ENCODE measurements at regions of chr4 and their contacts with region 1.

Region 1: DNA sequence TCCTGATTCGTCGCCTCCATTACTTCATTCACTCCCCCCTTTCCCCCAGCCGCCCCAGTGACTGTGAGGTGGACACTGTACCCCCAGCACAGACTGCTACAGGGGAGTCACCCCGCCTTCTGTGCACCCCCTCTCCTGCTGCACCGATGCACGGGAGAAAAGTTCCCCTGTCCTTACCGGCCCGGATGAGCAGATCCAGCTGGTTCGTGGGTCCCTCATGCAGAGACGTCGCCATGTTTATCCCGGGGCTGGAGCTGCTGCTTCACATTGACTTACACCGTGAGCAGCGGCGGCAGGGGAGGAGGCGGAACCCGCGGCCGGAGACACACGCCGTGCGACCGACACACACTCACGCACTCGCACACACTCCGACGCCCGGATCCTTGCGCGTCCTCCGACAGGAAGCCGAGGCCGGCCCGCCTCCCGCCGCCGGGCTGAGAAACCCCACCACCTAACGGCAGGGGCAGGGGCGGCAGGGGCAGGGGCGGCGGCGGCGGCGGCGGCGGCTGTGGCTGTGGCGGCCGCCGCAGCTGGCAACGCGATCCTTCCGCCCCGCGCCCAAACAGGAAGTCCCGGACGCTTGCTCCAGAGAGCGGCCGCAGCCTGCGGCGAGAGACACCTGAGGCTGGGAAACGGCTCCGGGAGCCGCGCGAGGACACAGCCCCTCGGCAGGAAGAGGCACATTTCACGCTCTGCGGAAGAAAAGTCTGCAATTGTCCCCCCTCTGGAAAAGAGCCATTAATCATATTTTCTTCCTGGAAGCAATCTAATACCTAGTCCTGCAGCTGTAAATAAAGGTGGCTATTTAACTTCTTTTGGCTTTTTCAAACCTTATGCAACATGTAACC is 68.6 kb downstream of the NOCT start:
- DNase-seq: peak; percentile 92
- ATAC-seq: peak; percentile 64
- H3K4me3 Mint-ChIP-seq: peak overlapping the region; percentile 100
- H3K27ac Mint-ChIP-seq: peak overlapping the region; percentile 99
- H3K4me1 Mint-ChIP-seq: peaks cover 30% of the 10 kb centered on the region
- H3K27me3 Mint-ChIP-seq: no peaks in the 10 kb centered on the region

Region 2: GRCh38 chr4:138242076-138242833 is 841.9 kb before region 1 on chr4 and contains the start of gene SLC7A11:
- CTCF ChIA-PET with region 1: no interaction called
- POLR2A ChIA-PET with region 1: no interaction called
- intact Hi-C with region 1: loop called in 1 of 2 experiments (anchors 2 kb)
- DNase-seq: peak; percentile 75
- ATAC-seq: peak; percentile 95
- H3K4me3 Mint-ChIP-seq: peak within 1 kb of the TSS; percentile 78
- H3K27ac Mint-ChIP-seq: peak within 1 kb of the TSS; percentile 88
- H3K4me1 Mint-ChIP-seq: peaks cover 7% of the 10 kb centered on the region
- H3K27me3 Mint-ChIP-seq: no peaks in the 10 kb centered on the region
- total RNA-seq, gene SLC7A11: 4.4 to 4.9 TPM

Region 3: GRCh38 chr4:138567696-138568095 is 516.5 kb before region 1 on chr4:
- CTCF ChIA-PET with region 1: no interaction called
- POLR2A ChIA-PET with region 1: no interaction called
- intact Hi-C with region 1: no loop called
- DNase-seq: no peak
- ATAC-seq: no peak
- H3K4me3 Mint-ChIP-seq: no peak overlapping the region
- H3K27ac Mint-ChIP-seq: no peak overlapping the region
- H3K4me1 Mint-ChIP-seq: no peaks in the 10 kb centered on the region
- H3K27me3 Mint-ChIP-seq: peaks cover 1% of the 10 kb centered on the region

Region 4: GRCh38 chr4:139015269-139015947 is 68.8 kb before region 1 on chr4 and contains the start of gene NOCT:
- CTCF ChIA-PET with region 1: no interaction called
- POLR2A ChIA-PET with region 1: interaction called, 4 read pairs
- intact Hi-C with region 1: loop called (anchors 1 kb)
- DNase-seq: peak; percentile 98
- ATAC-seq: peak; percentile 92
- H3K4me3 Mint-ChIP-seq: peak within 1 kb of the TSS; percentile 90
- H3K27ac Mint-ChIP-seq: peak within 1 kb of the TSS; percentile 96
- H3K4me1 Mint-ChIP-seq: peaks cover 41% of the 10 kb centered on the region
- H3K27me3 Mint-ChIP-seq: no peaks in the 10 kb centered on the region
- total RNA-seq, gene NOCT: 16.5 to 20.5 TPM

Region 5: GRCh38 chr4:139295206-139295941 is 211.2 kb after region 1 on chr4:
- CTCF ChIA-PET with region 1: interaction called, 3 read pairs
- POLR2A ChIA-PET with region 1: interaction called, 3 read pairs
- intact Hi-C with region 1: loop called (anchors 1 to 2 kb)
- DNase-seq: peak; percentile 99
- ATAC-seq: peak; percentile 89
- H3K4me3 Mint-ChIP-seq: peak overlapping the region; percentile 95
- H3K27ac Mint-ChIP-seq: peak overlapping the region; percentile 96
- H3K4me1 Mint-ChIP-seq: peaks cover 38% of the 10 kb centered on the region
- H3K27me3 Mint-ChIP-seq: no peaks in the 10 kb centered on the region

Region 6: GRCh38 chr4:139453371-139454110 is 369.4 kb after region 1 on chr4:
- CTCF ChIA-PET with region 1: interaction called, 4 read pairs
- POLR2A ChIA-PET with region 1: no interaction called
- intact Hi-C with region 1: loop called (anchors 1 kb)
- DNase-seq: peak; percentile 99
- ATAC-seq: peak; percentile 90
- H3K4me3 Mint-ChIP-seq: peak overlapping the region; percentile 91
- H3K27ac Mint-ChIP-seq: peak overlapping the region; percentile 98
- H3K4me1 Mint-ChIP-seq: peaks cover 48% of the 10 kb centered on the region
- H3K27me3 Mint-ChIP-seq: no peaks in the 10 kb centered on the region

Region 7: DNA sequence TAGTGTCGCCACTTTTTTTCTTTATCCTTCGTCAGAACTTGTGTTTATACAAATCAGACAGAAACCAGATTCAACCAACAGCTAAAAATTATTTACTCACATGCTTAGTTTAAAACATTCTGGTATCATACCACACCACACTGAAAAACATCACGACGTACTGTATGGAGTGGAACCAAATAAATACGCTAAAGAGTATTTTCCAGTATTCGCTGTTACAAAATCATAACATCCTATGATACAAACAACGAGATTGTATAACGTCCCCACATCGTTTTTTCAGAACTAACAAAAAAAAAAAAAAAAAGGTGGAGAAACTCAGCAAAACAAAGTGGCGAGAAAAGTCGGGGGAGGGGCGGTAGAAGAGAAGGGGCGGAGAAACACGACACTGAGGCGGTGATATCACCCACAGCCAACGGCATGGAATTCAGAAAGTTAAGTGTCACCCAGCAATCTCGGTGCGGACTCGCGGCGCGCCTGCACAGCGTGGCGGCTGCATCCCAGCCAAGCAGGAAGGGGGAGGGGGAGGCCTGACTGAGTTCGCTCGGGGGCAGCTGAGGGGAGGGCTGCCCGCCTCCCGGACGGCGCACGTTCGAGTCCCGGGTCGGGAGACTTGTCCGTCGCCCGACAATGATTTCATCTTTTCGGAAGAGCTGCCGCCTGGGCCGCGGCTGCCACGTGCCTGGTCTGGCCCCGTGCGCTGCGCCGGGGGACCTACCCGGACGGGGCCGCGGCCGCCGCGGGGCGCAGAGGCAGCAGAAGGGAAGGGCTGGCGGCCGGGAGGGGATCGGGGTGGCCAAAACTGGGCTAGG is 470.9 kb after region 1 on chr4:
- CTCF ChIA-PET with region 1: no interaction called
- POLR2A ChIA-PET with region 1: no interaction called
- intact Hi-C with region 1: loop called (anchors 1 to 5 kb)
- DNase-seq: peak; percentile 91
- ATAC-seq: peak; percentile 76
- H3K4me3 Mint-ChIP-seq: peak overlapping the region; percentile 96
- H3K27ac Mint-ChIP-seq: peak overlapping the region; percentile 91
- H3K4me1 Mint-ChIP-seq: peaks cover 45% of the 10 kb centered on the region
- H3K27me3 Mint-ChIP-seq: no peaks in the 10 kb centered on the region